Panc1 (cell line): ENCODE measurements at regions of chr10 and their contacts with region 1.

Region 1: DNA sequence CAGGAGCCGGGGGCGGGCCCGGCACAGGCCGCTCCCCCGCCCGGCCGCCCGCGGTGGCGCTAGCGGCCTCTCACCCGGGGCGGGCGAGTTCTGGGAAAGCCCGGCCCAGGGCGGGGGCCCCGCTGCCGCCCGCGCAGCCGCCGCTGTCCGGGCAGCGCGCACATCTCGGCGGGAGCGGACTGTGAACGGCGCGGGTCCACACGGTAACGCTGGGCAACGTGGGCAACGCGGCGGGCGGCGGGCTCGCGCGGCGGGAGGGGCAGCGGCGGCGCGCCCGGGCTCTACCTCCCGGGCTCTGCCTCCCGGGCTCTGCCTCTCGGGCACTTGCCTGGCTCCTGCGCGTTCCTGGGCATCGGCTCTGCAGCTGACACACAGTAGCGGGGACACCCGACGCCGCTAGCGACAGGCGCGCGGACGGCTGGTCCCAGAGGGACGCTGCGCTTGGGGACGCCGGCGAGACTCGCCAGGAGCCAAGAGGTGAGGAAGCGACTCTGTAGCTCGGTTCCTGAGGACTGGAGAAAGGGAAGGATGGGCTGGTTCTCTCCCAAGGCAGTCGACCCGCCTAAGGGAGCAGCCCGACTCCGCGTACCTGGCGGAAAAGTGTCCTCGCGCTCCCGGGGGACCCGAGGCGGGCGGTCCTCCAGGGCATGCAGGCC is at the start of gene PLCE1:
- DNase-seq: no peak
- ATAC-seq: peak; percentile 82
- H3K4me3 ChIP-seq: peak within 1 kb of the TSS; percentile 76 to 80
- H3K27ac ChIP-seq: peak within 1 kb of the TSS; percentile 97
- H3K4me1 ChIP-seq: peaks cover 73% of the 10 kb centered on the region
- H3K27me3 ChIP-seq: no peaks in the 10 kb centered on the region
- CTCF ChIP-seq: peak; percentile 41; the same call in 1 of the 2 replicates
- total RNA-seq, gene PLCE1: 39.7 TPM

Region 2: GRCh38 chr10:93746844-93747284 is 247.0 kb before region 1 on chr10:
- CTCF ChIA-PET with region 1: interaction called, 15 read pairs
- POLR2A ChIA-PET with region 1: no interaction called
- in situ Hi-C with region 1: no loop called
- intact Hi-C with region 1: no loop called
- DNase-seq: peak; percentile 92
- ATAC-seq: peak; percentile 91
- H3K4me3 ChIP-seq: no peak overlapping the region
- H3K27ac ChIP-seq: no peak overlapping the region
- H3K4me1 ChIP-seq: peaks cover 17% of the 10 kb centered on the region
- H3K27me3 ChIP-seq: no peaks in the 10 kb centered on the region
- CTCF ChIP-seq: peak; percentile 77

Region 3: DNA sequence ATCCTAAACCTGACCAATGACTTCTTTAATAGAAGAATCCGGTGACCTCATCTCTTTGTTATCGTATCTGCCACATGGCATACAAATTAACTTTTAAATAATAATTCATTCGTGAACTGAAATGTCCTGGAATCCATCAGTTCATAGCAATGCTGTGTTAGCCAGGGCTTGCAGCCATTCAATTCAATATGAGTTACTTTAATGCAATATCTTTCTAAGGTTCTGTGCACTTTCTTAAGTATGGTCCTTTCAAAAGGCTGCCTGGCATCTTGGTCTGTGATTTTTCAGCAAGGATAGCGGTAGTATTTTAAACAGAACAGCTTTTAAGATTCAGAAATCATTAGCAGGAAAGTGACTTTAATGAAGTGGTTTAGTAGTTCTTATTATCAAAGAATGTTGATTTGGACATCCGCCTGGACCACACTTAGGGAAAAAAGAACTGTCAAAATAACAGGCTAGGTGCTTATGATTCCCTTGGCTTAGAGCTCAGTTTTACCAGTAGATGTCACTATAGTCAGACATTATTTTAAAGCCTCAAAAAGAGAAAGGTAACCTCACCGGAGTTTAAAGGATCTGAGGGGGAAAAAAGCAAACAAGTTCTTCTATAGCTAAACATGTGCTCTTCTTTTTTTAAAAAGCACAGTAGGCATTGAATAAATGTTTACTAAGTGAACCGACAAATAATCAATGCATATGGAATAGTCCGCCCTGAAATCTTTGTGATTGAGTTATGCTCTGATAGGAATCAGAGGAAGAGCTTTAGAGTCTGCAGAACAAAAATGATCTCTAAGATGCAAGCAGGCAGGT is 77.5 kb before region 1 on chr10:
- CTCF ChIA-PET with region 1: interaction called, 4 read pairs
- POLR2A ChIA-PET with region 1: interaction called, 12 read pairs
- in situ Hi-C with region 1: no loop called
- intact Hi-C with region 1: loop called (anchors 2 kb)
- DNase-seq: no peak
- ATAC-seq: peak; percentile 85
- H3K4me3 ChIP-seq: no peak overlapping the region
- H3K27ac ChIP-seq: no peak overlapping the region
- H3K4me1 ChIP-seq: peaks cover 18% of the 10 kb centered on the region
- H3K27me3 ChIP-seq: no peaks in the 10 kb centered on the region
- CTCF ChIP-seq: peak; percentile 76

Region 4: GRCh38 chr10:94006591-94007561 is 13.0 kb after region 1 on chr10:
- CTCF ChIA-PET with region 1: interaction called, 15 read pairs
- POLR2A ChIA-PET with region 1: no interaction called
- in situ Hi-C with region 1: no loop called
- intact Hi-C with region 1: no loop called
- DNase-seq: no peak
- ATAC-seq: peak; percentile 78
- H3K4me3 ChIP-seq: no peak overlapping the region
- H3K27ac ChIP-seq: peak overlapping the region; percentile 65
- H3K4me1 ChIP-seq: peaks cover 44% of the 10 kb centered on the region
- H3K27me3 ChIP-seq: no peaks in the 10 kb centered on the region
- CTCF ChIP-seq: no peak

Region 5: DNA sequence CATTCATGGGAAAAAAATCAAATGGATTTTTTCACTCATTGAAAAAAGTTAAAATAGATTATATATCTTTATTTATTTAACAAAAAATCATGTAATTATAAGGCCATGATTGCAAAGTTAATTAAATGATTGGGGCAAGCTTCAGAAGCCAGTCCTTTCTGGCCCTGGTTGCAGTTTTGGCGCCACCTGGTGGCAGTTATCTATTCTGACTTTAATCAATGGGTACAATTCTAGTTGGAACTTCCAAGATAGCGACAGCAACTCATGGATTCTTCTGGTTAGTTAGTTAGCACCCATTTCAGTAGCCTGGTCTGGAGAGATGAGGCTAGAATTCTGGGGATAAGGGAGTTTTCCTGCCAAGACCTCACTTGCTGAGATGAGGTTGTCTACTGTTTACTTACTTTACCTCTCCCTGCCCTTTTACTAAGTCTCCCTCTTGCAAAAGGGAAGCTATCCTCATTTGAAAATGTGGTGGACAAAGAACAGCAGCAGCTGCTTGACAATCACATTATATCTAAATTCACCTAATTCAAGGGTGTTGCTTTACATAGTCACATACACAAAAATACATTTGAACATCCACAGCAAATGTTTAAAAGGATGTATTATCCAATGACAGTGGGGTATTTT is 326.5 kb after region 1 on chr10:
- CTCF ChIA-PET with region 1: no interaction called
- POLR2A ChIA-PET with region 1: no interaction called
- in situ Hi-C with region 1: no loop called
- intact Hi-C with region 1: loop called (anchors 10 kb)
- DNase-seq: peak; percentile 60
- ATAC-seq: peak; percentile 74
- H3K4me3 ChIP-seq: no peak overlapping the region
- H3K27ac ChIP-seq: no peak overlapping the region
- H3K4me1 ChIP-seq: no peaks in the 10 kb centered on the region
- H3K27me3 ChIP-seq: no peaks in the 10 kb centered on the region
- CTCF ChIP-seq: peak; percentile 96